OCI-LY7 (cell line): ENCODE measurements at regions of chr7 and their contacts with region 1.

Region 1: GRCh38 chr7:69825113-69825616 is 226.9 kb downstream of the AUTS2 start:
- DNase-seq: peak; percentile 74
- H3K4me3 ChIP-seq: peak overlapping the region; percentile 69
- H3K27ac ChIP-seq: peak overlapping the region; percentile 99
- H3K4me1 ChIP-seq: peaks cover 78% of the 10 kb centered on the region
- CTCF ChIP-seq: peak; percentile 75

Region 2: DNA sequence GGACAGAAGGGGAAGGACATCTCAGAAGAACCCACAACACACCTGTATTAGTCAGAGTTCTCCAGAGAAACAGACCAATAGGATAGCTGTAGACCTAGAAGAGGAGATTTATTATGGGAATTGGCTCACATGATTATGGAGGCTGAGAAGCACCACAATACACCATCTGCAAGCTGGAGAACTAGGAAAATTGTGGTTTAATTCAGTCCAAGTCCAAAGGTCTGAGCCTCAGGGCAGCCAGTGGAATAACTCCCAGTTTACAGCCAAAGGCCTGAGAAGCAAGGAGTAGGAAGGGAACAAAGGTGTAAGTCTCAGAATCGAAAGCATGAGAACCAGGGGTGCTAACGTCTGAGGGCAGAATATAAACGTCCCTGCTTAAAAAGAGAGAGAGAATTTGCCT is 326.5 kb before region 1 on chr7:
- CTCF ChIA-PET with region 1: no interaction called
- POLR2A ChIA-PET with region 1: no interaction called
- intact Hi-C with region 1: loop called (anchors 5 kb)
- DNase-seq: no peak
- H3K4me3 ChIP-seq: no peak overlapping the region
- H3K27ac ChIP-seq: no peak overlapping the region
- H3K4me1 ChIP-seq: peaks cover 41% of the 10 kb centered on the region
- CTCF ChIP-seq: no peak

Region 3: GRCh38 chr7:69768986-69769571 is 56.1 kb before region 1 on chr7:
- CTCF ChIA-PET with region 1: no interaction called
- POLR2A ChIA-PET with region 1: interaction called, 4 read pairs
- intact Hi-C with region 1: loop called (anchors 1 kb)
- DNase-seq: no peak
- H3K4me3 ChIP-seq: no peak overlapping the region
- H3K27ac ChIP-seq: peak overlapping the region; percentile 73
- H3K4me1 ChIP-seq: peaks cover 55% of the 10 kb centered on the region
- CTCF ChIP-seq: no peak

Region 4: DNA sequence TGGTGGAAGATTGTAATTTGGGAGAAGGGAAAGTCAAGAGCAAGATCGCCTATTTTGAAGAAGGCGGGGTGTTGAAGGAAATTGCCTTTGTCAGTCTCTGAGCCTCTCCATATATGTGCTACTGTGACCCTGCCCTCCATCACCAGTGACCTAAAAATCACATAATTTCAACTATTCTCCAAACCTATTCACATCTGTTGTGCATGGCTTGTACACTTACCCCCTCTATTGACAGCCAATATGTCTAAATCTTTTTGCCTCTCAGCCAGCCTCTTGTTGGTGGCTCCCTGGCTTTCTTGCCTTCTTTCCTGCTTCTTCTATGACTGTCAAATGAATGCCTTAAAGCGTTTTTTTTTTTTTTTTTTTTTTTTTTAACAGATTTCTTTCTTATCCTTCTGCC is 68.7 kb after region 1 on chr7:
- CTCF ChIA-PET with region 1: no interaction called
- POLR2A ChIA-PET with region 1: interaction called, 11 read pairs
- intact Hi-C with region 1: loop called (anchors 2 kb)
- DNase-seq: peak; percentile 67
- H3K4me3 ChIP-seq: no peak overlapping the region
- H3K27ac ChIP-seq: peak overlapping the region; percentile 20
- H3K4me1 ChIP-seq: peaks cover 83% of the 10 kb centered on the region
- CTCF ChIP-seq: peak; percentile 76

Region 5: GRCh38 chr7:70040970-70041766 is 216.0 kb after region 1 on chr7:
- CTCF ChIA-PET with region 1: no interaction called
- POLR2A ChIA-PET with region 1: no interaction called
- intact Hi-C with region 1: loop called (anchors 5 kb)
- DNase-seq: peak; percentile 28
- H3K4me3 ChIP-seq: no peak overlapping the region
- H3K27ac ChIP-seq: no peak overlapping the region
- H3K4me1 ChIP-seq: peaks cover 12% of the 10 kb centered on the region
- CTCF ChIP-seq: peak; percentile 82

Region 6: GRCh38 chr7:70148997-70149396 is 323.8 kb after region 1 on chr7:
- CTCF ChIA-PET with region 1: no interaction called
- POLR2A ChIA-PET with region 1: no interaction called
- intact Hi-C with region 1: no loop called
- DNase-seq: no peak
- H3K4me3 ChIP-seq: no peak overlapping the region
- H3K27ac ChIP-seq: no peak overlapping the region
- H3K4me1 ChIP-seq: no peaks in the 10 kb centered on the region
- CTCF ChIP-seq: no peak